ENCODE measurements at regions of chr1 and their contacts with region 1.

Region 1: GRCh38 chr1:180117764-180118116 is 36.9 kb upstream of the QSOX1 start:
- DNase-seq: peak; percentile 85
- ATAC-seq: peak; percentile 40
- H3K4me3 ChIP-seq: no peak overlapping the region
- H3K27ac ChIP-seq: peak overlapping the region; percentile 75
- H3K4me1 ChIP-seq: peaks cover 33% of the 10 kb centered on the region
- H3K27me3 ChIP-seq: no peaks in the 10 kb centered on the region
- CTCF ChIP-seq: no peak
- POLR2A ChIP-seq: no peak
- RAD21 ChIP-seq: no peak

Region 2: DNA sequence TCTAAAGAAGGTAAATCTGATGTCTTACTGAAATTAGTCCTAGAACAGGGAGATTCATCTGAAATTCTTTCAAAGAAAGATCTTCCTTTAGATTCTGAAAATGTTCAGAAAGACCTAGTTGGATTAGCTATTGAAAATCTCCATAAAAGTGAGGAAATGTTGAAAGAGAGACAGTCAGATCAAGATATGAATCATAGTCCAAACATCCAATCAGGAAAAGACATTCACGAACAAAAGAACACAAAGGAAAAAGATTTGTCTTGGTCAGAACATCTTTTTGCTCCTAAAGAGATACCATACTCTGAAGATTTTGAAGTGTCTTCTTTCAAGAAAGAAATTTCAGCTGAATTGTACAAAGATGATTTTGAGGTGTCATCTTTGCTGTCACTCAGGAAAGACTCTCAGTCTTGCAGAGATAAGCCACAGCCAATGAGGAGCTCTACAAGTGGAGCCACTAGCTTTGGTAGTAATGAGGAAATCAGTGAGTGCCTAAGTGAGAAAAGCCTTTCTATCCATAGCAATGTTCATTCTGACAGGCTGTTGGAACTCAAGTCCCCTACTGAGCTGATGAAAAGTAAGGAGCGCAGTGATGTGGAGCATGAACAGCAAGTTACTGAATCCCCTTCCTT is 24.7 kb before region 1 on chr1:
- CTCF ChIA-PET with region 1: no interaction called
- POLR2A ChIA-PET with region 1: no interaction called
- dilution Hi-C with region 1: no loop called
- in situ Hi-C with region 1: no loop called
- intact Hi-C with region 1: loop called (anchors 2 kb)
- DNase-seq: peak; percentile 30
- ATAC-seq: no peak
- H3K4me3 ChIP-seq: no peak overlapping the region
- H3K27ac ChIP-seq: peak overlapping the region; percentile 66; the same call in 1 of the 2 replicates
- H3K4me1 ChIP-seq: peaks cover 19% of the 10 kb centered on the region
- H3K27me3 ChIP-seq: no peaks in the 10 kb centered on the region
- CTCF ChIP-seq: no peak
- POLR2A ChIP-seq: no peak
- RAD21 ChIP-seq: no peak

Region 3: DNA sequence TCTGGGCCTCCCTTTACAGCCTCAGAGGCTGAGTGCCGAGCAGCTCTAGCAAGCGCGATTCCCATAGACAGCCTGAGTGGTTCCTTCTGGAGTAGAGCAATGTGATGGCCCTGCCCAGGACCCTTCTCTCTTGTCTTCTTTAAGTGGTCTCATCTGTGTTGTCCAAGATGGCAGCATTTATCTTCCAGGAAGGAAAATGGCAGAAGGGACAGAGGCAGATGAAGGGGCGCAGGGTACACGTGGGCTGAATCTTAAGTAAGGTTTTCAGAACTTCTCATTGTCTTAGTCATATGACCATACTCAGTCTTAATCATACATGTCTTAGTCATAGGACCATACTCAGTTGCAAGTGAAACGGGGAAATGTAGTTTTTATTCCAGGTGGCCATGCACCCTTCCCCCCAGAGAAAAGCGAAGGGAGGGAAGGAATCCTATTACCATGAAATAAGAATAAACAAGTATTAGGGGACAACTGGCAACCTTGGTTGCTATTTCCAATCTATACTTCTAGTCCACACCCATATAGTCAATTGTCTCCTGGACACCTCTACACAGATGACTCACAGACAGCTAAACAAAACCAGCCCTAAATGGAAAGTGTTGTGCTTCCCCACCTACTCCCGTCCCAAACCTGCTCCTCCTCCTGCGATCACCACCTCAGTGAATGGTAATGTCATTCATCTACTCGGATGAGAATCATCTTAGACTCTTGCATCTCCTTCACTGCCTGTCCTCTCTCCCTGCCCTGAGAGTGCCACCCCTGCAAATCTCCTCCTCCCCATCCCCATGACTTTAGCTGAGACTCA is 454.3 kb after region 1 on chr1:
- CTCF ChIA-PET with region 1: no interaction called
- POLR2A ChIA-PET with region 1: no interaction called
- dilution Hi-C with region 1: no loop called
- in situ Hi-C with region 1: no loop called
- intact Hi-C with region 1: no loop called
- DNase-seq: peak; percentile 50
- ATAC-seq: no peak
- H3K4me3 ChIP-seq: no peak overlapping the region
- H3K27ac ChIP-seq: no peak overlapping the region
- H3K4me1 ChIP-seq: peaks cover 3% of the 10 kb centered on the region; the same call in 1 of the 2 replicates
- H3K27me3 ChIP-seq: no peaks in the 10 kb centered on the region
- CTCF ChIP-seq: no peak
- POLR2A ChIP-seq: no peak
- RAD21 ChIP-seq: no peak

Measured in IMR-90 (cell line).